ENCODE measurements at regions of chr14 and their contacts with region 1.

Region 1: GRCh38 chr14:24259252-24259995 is 3.6 kb downstream of the TGM1 start:
- DNase-seq: peak in 2 of 5 donors; percentile 40 to 88
- H3K4me3 ChIP-seq: no peak overlapping the region
- H3K27ac ChIP-seq: peak overlapping the region in 1 of 2 donors; percentile 18
- H3K4me1 ChIP-seq: peaks cover 0 to 3% (median 0%) of the 10 kb centered on the region in 3 donors
- H3K27me3 ChIP-seq: no peaks in the 10 kb centered on the region
- CTCF ChIP-seq: no peak

Region 2: GRCh38 chr14:24299255-24300195 is 40.1 kb after region 1 on chr14 and contains the starts of genes DHRS1 and NOP9:
- intact Hi-C with region 1: loop called (anchors 10 kb)
- DNase-seq: peak; percentile 93 to 97 (median 96)
- H3K4me3 ChIP-seq: peak within 1 kb of the TSS; percentile 71 to 95 (median 92)
- H3K27ac ChIP-seq: peak within 1 kb of the TSS; percentile 76 to 80
- H3K4me1 ChIP-seq: peaks cover 0 to 17% (median 8%) of the 10 kb centered on the region in 3 donors
- H3K27me3 ChIP-seq: no peaks in the 10 kb centered on the region
- CTCF ChIP-seq: peak; percentile 17
- total RNA-seq, gene DHRS1: 32.7 TPM
- total RNA-seq, gene NOP9: 25.7 TPM